ENCODE measurements at regions of chr2 and their contacts with region 1.

Region 1: DNA sequence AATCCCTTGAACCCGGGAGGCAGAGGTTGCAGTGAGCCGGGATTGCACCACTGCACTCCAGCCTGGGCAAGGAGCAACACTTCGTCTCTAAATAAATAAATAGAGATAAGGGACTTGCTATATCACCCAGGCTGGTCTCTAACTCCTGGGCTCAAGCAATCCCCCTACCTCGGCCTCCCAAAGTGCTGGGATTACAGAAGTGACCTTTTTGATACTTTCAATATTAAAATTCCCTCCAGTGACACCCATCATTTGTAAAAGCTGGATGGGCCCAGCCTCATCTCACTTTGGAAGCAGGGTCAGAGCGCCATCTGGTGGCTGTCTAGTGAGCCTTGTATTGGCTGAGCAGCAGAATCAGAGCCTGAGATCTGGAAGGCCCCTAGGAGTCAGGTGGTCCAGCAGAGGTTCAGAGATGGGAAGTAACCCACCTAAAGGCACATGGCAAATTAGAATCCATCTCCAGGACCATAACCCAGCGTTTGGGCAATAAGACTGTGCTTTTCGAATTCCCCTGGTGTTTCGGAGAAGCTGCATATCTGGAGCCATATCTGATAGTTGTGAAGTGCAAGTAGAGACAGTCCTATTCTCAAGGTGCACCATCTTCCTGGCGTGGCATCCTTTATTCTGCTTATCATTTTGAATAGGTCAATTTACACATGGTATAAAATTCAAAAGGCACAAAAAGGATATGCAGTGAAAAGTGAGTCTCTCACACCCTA is 18.3 kb upstream of the SLC35F6 start:
- DNase-seq: peak; percentile 58 to 85 (median 80)
- ATAC-seq: peak; percentile 65
- H3K4me3 ChIP-seq: no peak overlapping the region
- H3K4me3 Mint-ChIP-seq: no peak overlapping the region
- H3K27ac ChIP-seq: no peak overlapping the region
- H3K27ac Mint-ChIP-seq: no peak overlapping the region
- H3K4me1 ChIP-seq: peaks cover 6% of the 10 kb centered on the region
- H3K4me1 Mint-ChIP-seq: peaks cover 4% of the 10 kb centered on the region
- H3K27me3 ChIP-seq: no peaks in the 10 kb centered on the region
- H3K27me3 Mint-ChIP-seq: no peaks in the 10 kb centered on the region
- CTCF ChIP-seq: peak; percentile 85

Region 2: DNA sequence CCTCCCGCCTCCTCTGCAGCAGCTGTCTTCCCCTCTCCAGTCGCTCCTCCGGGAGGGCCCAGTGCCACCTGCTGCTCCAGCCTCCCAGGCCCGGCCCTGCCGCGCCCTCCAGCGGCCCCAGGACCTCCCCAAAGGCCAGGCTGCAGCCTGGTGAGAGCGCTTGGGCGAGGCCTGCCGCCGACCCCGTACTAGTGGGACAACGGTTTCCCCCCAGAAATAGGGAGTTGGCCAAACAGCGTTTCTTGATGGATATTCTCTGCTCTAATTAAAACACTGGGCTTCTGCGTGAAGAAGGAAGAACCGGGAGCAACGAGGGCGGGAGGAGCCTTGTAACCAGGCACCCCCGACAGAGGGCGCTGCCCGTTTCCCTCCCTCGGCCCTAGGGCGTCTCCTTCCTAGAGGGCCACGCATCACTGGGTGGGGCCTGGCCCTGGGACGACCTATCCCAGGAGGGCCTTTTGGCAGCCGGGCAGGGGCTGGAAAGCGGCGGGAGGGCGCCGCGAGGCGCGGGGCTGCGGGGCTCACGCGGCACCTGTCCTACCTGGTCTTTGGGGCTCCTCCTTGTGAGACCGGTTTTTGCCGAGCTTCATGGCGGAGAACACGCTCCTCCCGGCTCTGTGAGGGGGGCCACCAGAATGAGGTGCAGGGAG is 242.4 kb before region 1 on chr2:
- CTCF ChIA-PET with region 1: interaction called, 3 read pairs
- POLR2A ChIA-PET with region 1: no interaction called
- intact Hi-C with region 1: loop called in 1 of 2 experiments (anchors 10 kb)
- DNase-seq: peak; percentile 57 to 84 (median 78)
- ATAC-seq: peak; percentile 98
- H3K4me3 ChIP-seq: peak overlapping the region; percentile 54 to 81
- H3K4me3 Mint-ChIP-seq: peak overlapping the region; percentile 78
- H3K27ac ChIP-seq: no peak overlapping the region
- H3K27ac Mint-ChIP-seq: no peak overlapping the region
- H3K4me1 ChIP-seq: peaks cover 9% of the 10 kb centered on the region
- H3K4me1 Mint-ChIP-seq: peaks cover 6% of the 10 kb centered on the region
- H3K27me3 ChIP-seq: peaks cover 0 to 7% of the 10 kb centered on the region in 2 experiments
- H3K27me3 Mint-ChIP-seq: no peaks in the 10 kb centered on the region
- CTCF ChIP-seq: peak; percentile 80

Region 3: DNA sequence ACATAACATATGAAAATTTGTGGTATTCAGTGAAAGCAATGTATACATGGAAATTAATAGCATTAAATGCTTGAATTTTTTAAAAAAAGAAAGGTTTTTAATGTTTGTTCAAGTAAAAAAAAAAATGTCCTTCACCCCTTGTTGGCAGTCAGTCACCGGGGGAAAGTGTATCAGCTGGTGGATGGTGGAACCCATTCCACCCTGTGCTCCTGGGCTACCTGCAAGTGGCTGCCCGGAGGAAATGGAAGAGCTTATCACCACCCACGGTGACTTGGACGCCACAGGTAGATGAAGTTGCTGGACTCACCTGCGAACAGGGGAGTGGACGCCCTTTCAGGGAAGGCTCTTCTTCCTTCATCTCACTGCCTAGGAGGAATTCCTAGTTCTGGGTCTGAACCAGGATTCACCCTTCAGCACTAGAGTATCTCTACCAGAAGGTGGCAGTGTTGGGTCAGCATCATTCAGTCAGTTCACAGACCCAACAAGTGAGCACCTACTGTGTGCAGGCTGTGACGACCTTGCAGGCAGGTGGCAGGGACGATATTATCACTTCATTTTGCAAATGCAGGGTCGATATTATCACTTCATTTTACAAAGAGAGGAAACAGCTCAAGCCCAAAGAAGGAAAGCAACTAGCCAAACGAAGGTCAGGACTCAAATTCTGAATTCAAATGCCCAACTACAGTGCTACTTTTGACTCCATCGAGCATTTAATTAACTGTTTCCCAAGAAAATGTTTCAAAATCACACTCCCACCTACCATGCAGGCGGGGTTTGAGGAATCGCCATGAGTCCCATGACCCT is 140.4 kb before region 1 on chr2:
- CTCF ChIA-PET with region 1: interaction called, 147 read pairs
- POLR2A ChIA-PET with region 1: no interaction called
- intact Hi-C with region 1: loop called (anchors 1 kb)
- DNase-seq: peak in 6 of 9 experiments; percentile 14 to 71 (median 42)
- ATAC-seq: no peak
- H3K4me3 ChIP-seq: no peak overlapping the region
- H3K4me3 Mint-ChIP-seq: no peak overlapping the region
- H3K27ac ChIP-seq: no peak overlapping the region
- H3K27ac Mint-ChIP-seq: no peak overlapping the region
- H3K4me1 ChIP-seq: peaks cover 23% of the 10 kb centered on the region
- H3K4me1 Mint-ChIP-seq: peaks cover 21% of the 10 kb centered on the region
- H3K27me3 ChIP-seq: no peaks in the 10 kb centered on the region
- H3K27me3 Mint-ChIP-seq: peaks cover 20% of the 10 kb centered on the region
- CTCF ChIP-seq: peak; percentile 70

Region 4: GRCh38 chr2:26727641-26728561 is 17.9 kb before region 1 on chr2:
- CTCF ChIA-PET with region 1: interaction called, 14 read pairs
- POLR2A ChIA-PET with region 1: no interaction called
- intact Hi-C with region 1: loop called in 1 of 2 experiments (anchors 1 kb)
- DNase-seq: peak in 6 of 9 experiments; percentile 5 to 50 (median 21)
- ATAC-seq: peak; percentile 49
- H3K4me3 ChIP-seq: no peak overlapping the region
- H3K4me3 Mint-ChIP-seq: no peak overlapping the region
- H3K27ac ChIP-seq: no peak overlapping the region
- H3K27ac Mint-ChIP-seq: no peak overlapping the region
- H3K4me1 ChIP-seq: no peaks in the 10 kb centered on the region
- H3K4me1 Mint-ChIP-seq: no peaks in the 10 kb centered on the region
- H3K27me3 ChIP-seq: peaks cover 0 to 3% of the 10 kb centered on the region in 2 experiments
- H3K27me3 Mint-ChIP-seq: peaks cover 16% of the 10 kb centered on the region
- CTCF ChIP-seq: no peak

Region 5: DNA sequence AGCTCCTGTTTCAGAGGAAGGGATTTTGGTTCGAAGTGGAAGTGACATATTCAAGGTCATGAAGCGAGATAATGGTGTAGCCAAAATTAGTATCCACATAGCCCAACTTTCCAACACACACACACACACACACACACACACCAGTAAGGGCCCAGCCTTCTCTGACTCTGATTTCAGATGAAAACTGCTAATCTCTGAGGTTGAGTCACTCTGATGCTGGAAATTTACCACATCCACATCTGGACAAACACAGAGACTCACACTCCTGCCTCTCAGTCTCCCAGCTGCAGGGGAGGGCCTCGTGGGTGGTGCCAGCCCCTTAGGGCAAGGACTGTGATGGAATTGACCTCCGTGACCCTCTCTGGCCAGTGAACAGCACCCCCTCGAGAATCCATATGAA is 10.7 kb before region 1 on chr2:
- CTCF ChIA-PET with region 1: interaction called, 12 read pairs
- POLR2A ChIA-PET with region 1: no interaction called
- intact Hi-C with region 1: no loop called
- DNase-seq: no peak
- ATAC-seq: no peak
- H3K4me3 ChIP-seq: no peak overlapping the region
- H3K4me3 Mint-ChIP-seq: no peak overlapping the region
- H3K27ac ChIP-seq: no peak overlapping the region
- H3K27ac Mint-ChIP-seq: no peak overlapping the region
- H3K4me1 ChIP-seq: no peaks in the 10 kb centered on the region
- H3K4me1 Mint-ChIP-seq: no peaks in the 10 kb centered on the region
- H3K27me3 ChIP-seq: peaks cover 0 to 3% of the 10 kb centered on the region in 2 experiments
- H3K27me3 Mint-ChIP-seq: peaks cover 8% of the 10 kb centered on the region
- CTCF ChIP-seq: no peak

Region 6: GRCh38 chr2:26757873-26758789 is 12.4 kb after region 1 on chr2:
- CTCF ChIA-PET with region 1: interaction called, 20 read pairs
- POLR2A ChIA-PET with region 1: no interaction called
- intact Hi-C with region 1: no loop called
- DNase-seq: no peak
- ATAC-seq: no peak
- H3K4me3 ChIP-seq: no peak overlapping the region
- H3K4me3 Mint-ChIP-seq: no peak overlapping the region
- H3K27ac ChIP-seq: no peak overlapping the region
- H3K27ac Mint-ChIP-seq: no peak overlapping the region
- H3K4me1 ChIP-seq: no peaks in the 10 kb centered on the region
- H3K4me1 Mint-ChIP-seq: no peaks in the 10 kb centered on the region
- H3K27me3 ChIP-seq: no peaks in the 10 kb centered on the region
- H3K27me3 Mint-ChIP-seq: peaks cover 5% of the 10 kb centered on the region
- CTCF ChIP-seq: no peak

Region 7: GRCh38 chr2:27148801-27149439 is 403.2 kb after region 1 on chr2 and contains the start of gene TCF23:
- CTCF ChIA-PET with region 1: no interaction called
- POLR2A ChIA-PET with region 1: no interaction called
- intact Hi-C with region 1: no loop called
- DNase-seq: no peak
- ATAC-seq: no peak
- H3K4me3 ChIP-seq: no peak within 1 kb of the TSS
- H3K4me3 Mint-ChIP-seq: no peak within 1 kb of the TSS
- H3K27ac ChIP-seq: no peak within 1 kb of the TSS
- H3K27ac Mint-ChIP-seq: no peak within 1 kb of the TSS
- H3K4me1 ChIP-seq: no peaks in the 10 kb centered on the region
- H3K4me1 Mint-ChIP-seq: no peaks in the 10 kb centered on the region
- H3K27me3 ChIP-seq: peaks cover 0 to 2% of the 10 kb centered on the region in 2 experiments
- H3K27me3 Mint-ChIP-seq: peaks cover 11% of the 10 kb centered on the region
- CTCF ChIP-seq: no peak
- total RNA-seq, gene TCF23: not detected

Measured in CD8-positive, alpha-beta T cell (primary cell).